B cell (primary cell): ENCODE measurements at regions of chr12 and their contacts with region 1.

Region 1: DNA sequence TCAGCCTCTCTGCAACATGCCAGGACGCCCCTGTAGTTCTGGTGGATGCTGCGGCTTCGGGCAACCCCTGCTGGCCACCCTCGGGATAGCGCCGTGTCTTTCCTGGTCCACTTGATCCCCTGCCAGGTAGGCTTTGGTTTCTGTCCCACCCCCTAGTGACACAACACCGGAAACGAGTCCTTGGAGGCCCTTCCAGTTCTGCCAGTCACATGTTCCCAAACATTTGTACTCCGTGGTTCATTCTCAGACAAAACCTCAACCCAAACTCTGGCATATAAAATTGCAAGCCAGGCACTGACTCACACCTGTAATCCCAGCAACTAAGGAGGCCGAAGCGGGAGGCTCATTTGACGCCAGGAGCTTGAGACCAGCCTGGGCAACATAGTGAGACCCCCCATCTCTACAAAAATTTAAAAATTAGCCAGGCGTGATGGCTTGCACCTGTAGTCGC is 37.1 kb downstream of the RASAL1 start:
- DNase-seq: peak; percentile 82
- ATAC-seq: peak; percentile 87
- H3K4me3 ChIP-seq: no peak overlapping the region
- H3K4me3 Mint-ChIP-seq: no peak overlapping the region
- H3K27ac ChIP-seq: peak overlapping the region in 1 of 2 donors; percentile 15
- H3K27ac Mint-ChIP-seq: peak overlapping the region; percentile 73
- H3K4me1 ChIP-seq: peaks cover 9 to 20% of the 10 kb centered on the region in 2 donors
- H3K4me1 Mint-ChIP-seq: peaks cover 18% of the 10 kb centered on the region
- H3K27me3 ChIP-seq: peaks cover 0 to under 1% (median 0%) of the 10 kb centered on the region in 4 experiments
- H3K27me3 Mint-ChIP-seq: no peaks in the 10 kb centered on the region
- CTCF ChIP-seq: peak; percentile 95

Region 2: GRCh38 chr12:113030875-113031525 is 67.5 kb before region 1 on chr12:
- CTCF ChIA-PET with region 1: interaction called, 11 read pairs
- POLR2A ChIA-PET with region 1: no interaction called
- intact Hi-C with region 1: no loop called
- DNase-seq: peak; percentile 67
- ATAC-seq: no peak
- H3K4me3 ChIP-seq: no peak overlapping the region
- H3K4me3 Mint-ChIP-seq: peak overlapping the region; percentile 0
- H3K27ac ChIP-seq: no peak overlapping the region
- H3K27ac Mint-ChIP-seq: no peak overlapping the region
- H3K4me1 ChIP-seq: peaks cover 4 to 6% of the 10 kb centered on the region in 2 donors
- H3K4me1 Mint-ChIP-seq: peaks cover 5% of the 10 kb centered on the region
- H3K27me3 ChIP-seq: no peaks in the 10 kb centered on the region
- H3K27me3 Mint-ChIP-seq: peaks cover 3% of the 10 kb centered on the region
- CTCF ChIP-seq: peak; percentile 83

Region 3: DNA sequence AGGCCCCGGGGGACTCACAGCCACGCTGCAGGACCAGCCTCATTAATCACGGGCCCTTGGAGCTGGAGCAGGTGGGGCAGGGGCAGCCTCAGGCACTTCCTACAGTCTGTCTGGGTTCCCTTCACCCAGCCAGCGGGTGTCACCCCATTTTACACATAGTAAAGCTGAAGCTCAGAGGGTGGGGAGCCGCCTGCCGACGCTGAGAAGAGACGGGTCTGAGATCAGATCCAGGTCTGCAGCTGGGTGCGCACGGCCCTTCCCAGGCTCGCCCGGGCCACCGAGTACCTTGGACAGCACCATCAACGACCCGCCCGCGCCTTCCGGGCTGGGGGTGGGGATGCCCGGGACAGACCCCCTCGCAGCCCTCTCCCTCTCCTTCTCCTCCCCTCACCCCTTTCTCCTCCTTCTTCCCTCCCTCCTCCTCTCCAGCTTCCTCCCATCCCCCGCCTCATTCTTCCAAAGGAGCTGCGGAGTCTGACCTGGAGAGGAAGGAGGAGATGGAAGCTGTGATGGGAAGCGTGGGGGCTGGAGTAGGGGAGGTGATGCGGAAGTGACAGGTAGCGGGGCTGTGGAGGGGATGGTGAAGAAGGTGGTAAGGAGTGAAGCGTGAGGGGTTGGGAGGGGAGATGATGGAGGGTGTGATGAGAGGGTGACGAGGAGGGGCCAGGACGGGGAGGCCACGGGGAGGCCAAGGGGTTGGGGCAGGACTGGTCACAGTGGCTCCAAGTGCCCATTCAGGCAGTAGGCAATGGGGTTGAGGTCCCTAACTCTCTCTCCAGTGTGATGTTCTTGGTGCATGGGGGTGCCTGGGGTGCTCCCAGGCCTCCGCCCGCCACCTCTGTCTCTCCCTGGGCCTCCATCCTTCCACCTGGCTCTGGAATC is 33.1 kb before region 1 on chr12:
- CTCF ChIA-PET with region 1: interaction called, 28 read pairs
- POLR2A ChIA-PET with region 1: no interaction called
- intact Hi-C with region 1: no loop called
- DNase-seq: peak; percentile 68
- ATAC-seq: peak; percentile 32
- H3K4me3 ChIP-seq: peak overlapping the region in 2 of 5 experiments; percentile 7 to 13
- H3K4me3 Mint-ChIP-seq: peak overlapping the region; percentile 65
- H3K27ac ChIP-seq: peak overlapping the region; percentile 25 to 84
- H3K27ac Mint-ChIP-seq: peak overlapping the region; percentile 67
- H3K4me1 ChIP-seq: peaks cover 100% of the 10 kb centered on the region in 2 donors
- H3K4me1 Mint-ChIP-seq: peaks cover 80% of the 10 kb centered on the region
- H3K27me3 ChIP-seq: no peaks in the 10 kb centered on the region
- H3K27me3 Mint-ChIP-seq: no peaks in the 10 kb centered on the region
- CTCF ChIP-seq: no peak

Region 4: DNA sequence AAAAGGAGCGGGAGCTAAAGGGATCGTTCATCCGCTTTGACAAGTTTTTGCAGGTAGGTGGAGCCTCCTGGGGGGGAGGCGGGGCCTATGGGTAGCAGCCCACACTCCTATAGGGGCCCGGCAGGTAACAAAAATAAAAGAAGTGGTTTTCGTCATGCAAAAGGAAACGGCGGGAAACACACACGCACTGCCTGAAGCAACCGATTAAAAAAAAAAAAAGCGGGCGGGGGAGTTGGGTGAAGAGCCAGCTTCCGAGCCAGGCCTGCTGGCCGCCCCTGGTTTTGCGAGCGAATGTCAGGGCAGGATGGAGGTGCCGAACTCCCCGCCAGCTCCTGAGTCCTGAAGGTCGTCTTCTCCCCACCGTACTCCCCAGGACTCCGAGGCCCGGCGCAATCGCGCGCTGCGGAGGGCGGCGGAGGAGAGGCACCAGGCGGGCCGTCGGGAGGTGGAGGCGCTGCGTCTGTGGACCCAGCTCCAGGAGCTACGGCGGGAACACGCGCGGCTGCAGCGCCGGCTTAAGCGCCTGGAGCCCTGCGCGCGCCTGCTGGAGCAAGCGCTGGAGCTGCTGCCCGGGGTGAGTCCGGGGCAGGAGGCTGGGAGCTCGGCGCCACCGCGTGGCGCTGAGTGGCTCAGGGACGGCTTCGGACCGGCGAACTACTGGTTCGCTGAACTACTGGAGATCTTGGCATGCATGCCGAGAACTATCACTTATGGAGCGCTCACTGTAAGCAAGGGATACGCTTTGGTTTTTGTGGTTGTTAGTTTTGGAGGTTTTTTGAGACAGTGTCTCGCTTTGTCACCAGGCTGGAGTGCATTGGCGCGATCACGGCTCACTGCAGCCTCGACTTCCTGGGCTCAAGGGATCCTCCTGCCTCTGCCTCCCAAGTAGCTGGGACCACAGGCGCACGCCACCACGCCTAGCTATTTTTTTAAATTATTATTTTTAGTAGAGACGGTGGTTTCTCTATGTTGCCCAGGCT is 54.7 kb after region 1 on chr12:
- CTCF ChIA-PET with region 1: interaction called, 12 read pairs
- POLR2A ChIA-PET with region 1: interaction called, 3 read pairs
- intact Hi-C with region 1: loop called (anchors 5 kb)
- DNase-seq: peak; percentile 72
- ATAC-seq: peak; percentile 73
- H3K4me3 ChIP-seq: peak overlapping the region; percentile 34 to 61 (median 56)
- H3K4me3 Mint-ChIP-seq: peak overlapping the region; percentile 88
- H3K27ac ChIP-seq: no peak overlapping the region
- H3K27ac Mint-ChIP-seq: no peak overlapping the region
- H3K4me1 ChIP-seq: peaks cover 15 to 32% of the 10 kb centered on the region in 2 donors
- H3K4me1 Mint-ChIP-seq: peaks cover 26% of the 10 kb centered on the region
- H3K27me3 ChIP-seq: peaks cover 0 to 25% (median 8%) of the 10 kb centered on the region in 4 experiments
- H3K27me3 Mint-ChIP-seq: peaks cover 6% of the 10 kb centered on the region
- CTCF ChIP-seq: peak; percentile 23